Aorta (tissue), 5 donors: ENCODE measurements at regions of chr10 and their contacts with region 1.

Region 1: DNA sequence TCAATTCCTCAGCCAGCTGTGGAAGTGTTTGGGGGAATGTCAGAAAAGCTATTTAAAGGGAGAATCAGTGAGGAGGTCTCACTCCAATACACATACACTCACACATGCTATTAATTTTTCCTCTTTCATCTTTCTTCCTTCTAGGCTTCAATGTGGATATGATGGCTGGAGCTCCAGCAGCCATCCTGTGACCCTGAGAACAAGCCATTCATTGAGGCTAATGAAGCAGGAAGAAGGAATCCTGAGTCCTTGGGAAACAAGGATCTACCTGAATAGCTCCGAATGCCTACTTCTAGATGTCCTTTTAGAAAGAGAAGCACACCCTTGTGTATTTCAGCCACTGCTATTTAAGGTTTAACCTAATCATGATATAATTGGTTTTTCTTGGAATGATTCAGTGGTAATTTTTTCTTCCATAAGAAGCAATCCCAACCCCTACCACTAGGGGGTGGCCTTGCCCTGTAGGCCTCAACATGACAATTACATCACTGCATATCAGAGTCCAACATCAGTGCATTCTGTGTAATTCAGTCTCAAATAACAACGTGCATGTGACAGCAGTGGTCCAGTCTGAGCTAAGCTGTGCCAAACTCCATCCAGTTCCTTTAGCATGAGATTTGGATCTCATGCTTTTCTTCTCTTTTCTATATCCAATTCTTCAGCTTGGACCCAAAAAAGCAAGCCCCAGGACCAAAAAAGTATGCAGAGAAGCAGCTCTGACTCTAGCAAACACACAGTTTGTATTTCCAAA is 85.3 kb upstream of the ANKRD1 start:
- DNase-seq: peak in 1 of 2 donors; percentile 58
- ATAC-seq: peak; percentile 90
- H3K4me3 ChIP-seq: no peak overlapping the region
- H3K27ac ChIP-seq: peak overlapping the region in 1 of 2 donors; percentile 44
- H3K4me1 ChIP-seq: no peaks in the 10 kb centered on the region
- H3K27me3 ChIP-seq: no peaks in the 10 kb centered on the region

Region 2: DNA sequence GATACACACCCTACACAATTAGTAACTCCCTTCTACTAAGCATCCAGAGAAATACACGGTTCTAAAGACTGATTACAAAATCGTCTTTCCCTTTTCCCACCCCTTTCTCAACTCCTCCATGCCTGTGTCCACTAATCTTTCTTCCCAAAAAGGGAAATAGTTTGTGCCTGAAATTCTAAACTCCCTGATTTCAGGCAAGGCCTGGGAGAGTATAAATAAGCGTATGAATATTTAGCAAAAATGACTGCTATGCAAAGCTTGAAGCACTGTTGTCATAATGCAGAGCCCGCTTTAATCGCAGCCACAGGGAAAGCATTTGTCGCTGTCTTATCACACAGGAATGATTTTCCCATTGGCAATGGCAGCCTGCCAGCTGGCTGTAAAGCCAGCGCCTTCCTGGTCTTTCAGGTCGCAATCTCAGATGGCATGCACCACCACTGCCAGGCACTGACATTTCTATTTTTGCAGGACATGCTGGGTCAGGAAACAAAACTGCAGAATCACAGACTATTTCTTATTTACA is 71.4 kb after region 1 on chr10:
- intact Hi-C with region 1: loop called in 1 of 2 experiments (anchors 5 kb)
- DNase-seq: peak; percentile 92 to 94
- ATAC-seq: peak; percentile 79
- H3K4me3 ChIP-seq: no peak overlapping the region
- H3K27ac ChIP-seq: peak overlapping the region; percentile 96 to 100
- H3K4me1 ChIP-seq: peaks cover 13 to 17% of the 10 kb centered on the region in 2 donors
- H3K27me3 ChIP-seq: no peaks in the 10 kb centered on the region

Region 3: DNA sequence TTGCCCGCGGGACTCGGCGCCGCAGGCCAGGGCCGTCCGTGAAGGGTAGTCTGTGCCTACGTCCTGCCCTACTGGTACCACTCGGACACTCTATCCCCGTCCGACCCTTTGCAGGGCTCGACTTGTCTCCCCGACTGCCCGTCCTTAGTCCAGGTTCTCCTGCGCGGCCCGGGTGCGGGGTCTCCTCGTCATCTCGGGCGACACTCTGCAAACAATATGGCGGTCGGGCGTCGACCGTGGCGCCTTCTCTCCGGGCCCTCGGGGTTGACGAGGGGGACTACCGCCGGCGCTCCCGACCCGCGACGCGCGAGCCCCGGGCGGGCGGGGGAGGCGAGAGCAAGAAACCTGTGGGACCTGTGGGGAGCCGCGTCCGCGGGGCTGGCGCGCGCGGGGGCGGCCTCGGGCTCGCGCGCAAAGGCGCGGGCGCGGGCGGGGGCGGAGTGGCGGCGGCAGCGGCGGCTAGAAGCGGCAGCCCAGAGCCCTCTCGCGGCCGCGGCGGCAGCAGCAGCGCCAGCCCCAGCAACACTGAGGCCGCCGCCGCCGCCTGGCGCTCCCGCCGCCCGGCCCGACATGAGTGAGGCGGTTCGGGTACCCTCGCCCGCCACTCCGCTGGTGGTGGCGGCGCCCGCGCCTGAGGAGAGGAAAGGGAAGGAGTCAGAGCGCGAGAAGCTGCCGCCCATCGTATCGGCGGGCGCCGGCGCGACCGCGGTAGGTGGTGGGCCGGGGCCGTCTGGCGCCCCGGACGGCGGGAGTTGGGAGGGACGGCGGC is 403.9 kb after region 1 on chr10 and contains the start of gene HECTD2:
- intact Hi-C with region 1: no loop called
- DNase-seq: peak; percentile 89 to 93
- ATAC-seq: peak; percentile 89
- H3K4me3 ChIP-seq: peak within 1 kb of the TSS; percentile 83
- H3K27ac ChIP-seq: peak within 1 kb of the TSS; percentile 98
- H3K4me1 ChIP-seq: peaks cover 2 to 5% of the 10 kb centered on the region in 2 donors
- H3K27me3 ChIP-seq: no peaks in the 10 kb centered on the region
- total RNA-seq, gene HECTD2: 23.4 to 25.5 TPM